ENCODE measurements at regions of chr1 and their contacts with region 1.

Region 1: GRCh38 chr1:70234733-70235132 is 13.6 kb downstream of the SRSF11 start:
- DNase-seq: no peak
- ATAC-seq: no peak
- H3K4me3 ChIP-seq: no peak overlapping the region
- H3K4me3 Mint-ChIP-seq: no peak overlapping the region
- H3K27ac ChIP-seq: no peak overlapping the region
- H3K27ac Mint-ChIP-seq: no peak overlapping the region
- H3K4me1 ChIP-seq: no peaks in the 10 kb centered on the region
- H3K4me1 Mint-ChIP-seq: peaks cover 23% of the 10 kb centered on the region
- H3K27me3 ChIP-seq: no peaks in the 10 kb centered on the region
- H3K27me3 Mint-ChIP-seq: no peaks in the 10 kb centered on the region
- CTCF ChIP-seq: no peak

Region 2: DNA sequence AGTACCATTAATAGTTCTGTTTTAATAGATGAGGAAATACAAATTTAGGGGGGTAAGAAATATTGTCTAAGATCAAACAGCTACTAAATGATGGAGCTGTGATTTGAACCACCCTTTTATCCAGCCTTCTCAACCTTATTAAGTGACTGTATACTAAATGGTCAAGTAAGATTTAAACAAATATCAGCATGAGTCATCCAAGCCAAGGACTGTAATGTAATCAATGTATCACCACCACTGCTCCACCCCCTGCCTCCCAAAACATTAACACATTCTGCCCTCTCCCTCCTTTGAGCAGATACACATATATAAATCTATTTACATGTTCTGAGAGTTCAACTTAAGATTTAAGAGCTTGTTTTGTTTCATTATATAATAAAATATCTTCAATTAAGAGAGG is 88.2 kb before region 1 on chr1:
- CTCF ChIA-PET with region 1: no interaction called
- POLR2A ChIA-PET with region 1: no interaction called
- intact Hi-C with region 1: no loop called
- DNase-seq: no peak
- ATAC-seq: no peak
- H3K4me3 ChIP-seq: no peak overlapping the region
- H3K4me3 Mint-ChIP-seq: no peak overlapping the region
- H3K27ac ChIP-seq: no peak overlapping the region
- H3K27ac Mint-ChIP-seq: no peak overlapping the region
- H3K4me1 ChIP-seq: no peaks in the 10 kb centered on the region
- H3K4me1 Mint-ChIP-seq: no peaks in the 10 kb centered on the region
- H3K27me3 ChIP-seq: no peaks in the 10 kb centered on the region
- H3K27me3 Mint-ChIP-seq: no peaks in the 10 kb centered on the region
- CTCF ChIP-seq: no peak

Region 3: DNA sequence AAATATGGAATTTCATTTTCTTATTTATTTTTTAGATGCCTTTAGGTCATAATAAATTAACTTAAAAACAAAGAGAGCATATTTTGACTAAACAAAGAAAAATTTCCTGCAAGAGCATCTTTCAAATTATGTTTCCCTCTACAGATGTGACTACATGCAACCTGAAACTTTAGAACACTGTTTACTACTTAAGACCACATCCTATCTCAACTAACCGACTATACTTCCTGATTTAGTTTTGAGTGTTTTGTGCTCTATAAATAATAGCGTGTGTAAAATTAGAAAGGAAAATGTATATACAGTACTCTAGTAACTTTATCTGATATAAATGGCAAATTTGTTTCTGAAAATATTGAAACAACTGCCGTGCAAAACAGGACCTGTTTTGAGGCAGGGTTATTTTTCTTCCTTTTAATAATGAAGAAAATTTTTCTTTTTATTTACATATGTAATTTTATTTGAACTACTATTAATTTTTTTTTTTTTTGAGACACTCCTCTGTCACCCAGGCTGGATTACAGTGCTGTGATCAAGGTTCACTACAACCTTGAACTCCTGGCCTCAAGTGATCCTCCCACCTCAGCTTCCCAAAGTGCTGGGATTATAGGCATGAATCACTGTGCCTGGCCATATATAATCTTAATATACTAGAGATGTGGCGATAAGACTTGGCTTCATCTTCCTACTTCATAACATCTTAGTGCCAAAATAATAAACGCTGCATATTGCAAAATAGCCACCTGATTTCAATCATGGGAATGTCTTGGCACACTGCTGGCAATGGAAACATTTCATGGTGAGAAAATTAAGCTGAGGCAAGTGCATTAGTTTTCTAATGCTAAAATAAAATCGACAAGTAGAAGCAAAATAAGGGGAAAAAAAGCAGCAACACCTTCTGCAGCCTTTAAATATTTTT is 833.9 kb after region 1 on chr1:
- CTCF ChIA-PET with region 1: no interaction called
- POLR2A ChIA-PET with region 1: no interaction called
- intact Hi-C with region 1: loop called in 1 of 2 experiments (anchors 5 kb)
- DNase-seq: no peak
- ATAC-seq: no peak
- H3K4me3 ChIP-seq: no peak overlapping the region
- H3K4me3 Mint-ChIP-seq: no peak overlapping the region
- H3K27ac ChIP-seq: no peak overlapping the region
- H3K27ac Mint-ChIP-seq: no peak overlapping the region
- H3K4me1 ChIP-seq: no peaks in the 10 kb centered on the region
- H3K4me1 Mint-ChIP-seq: peaks cover 10% of the 10 kb centered on the region
- H3K27me3 ChIP-seq: no peaks in the 10 kb centered on the region
- H3K27me3 Mint-ChIP-seq: no peaks in the 10 kb centered on the region
- CTCF ChIP-seq: no peak